ENCODE measurements at regions of chr15 and their contacts with region 1.

Region 1: GRCh38 chr15:25501828-25502446 is 63.1 kb upstream of the UBE3A start:
- DNase-seq: peak; percentile 32
- H3K4me3 ChIP-seq: no peak overlapping the region
- H3K27ac ChIP-seq: no peak overlapping the region
- H3K4me1 ChIP-seq: no peaks in the 10 kb centered on the region
- H3K27me3 ChIP-seq: no peaks in the 10 kb centered on the region
- CTCF ChIP-seq: peak; percentile 6 to 19
- POLR2A ChIP-seq: no peak

Region 2: GRCh38 chr15:25136119-25136518 is 365.8 kb before region 1 on chr15:
- CTCF ChIA-PET with region 1: no interaction called
- POLR2A ChIA-PET with region 1: no interaction called
- dilution Hi-C with region 1: no loop called
- intact Hi-C with region 1: loop called (anchors 5 kb)
- DNase-seq: peak; percentile 8
- H3K4me3 ChIP-seq: no peak overlapping the region
- H3K27ac ChIP-seq: no peak overlapping the region
- H3K4me1 ChIP-seq: no peaks in the 10 kb centered on the region
- H3K27me3 ChIP-seq: no peaks in the 10 kb centered on the region
- CTCF ChIP-seq: peak; percentile 10 to 33
- POLR2A ChIP-seq: no peak

Region 3: GRCh38 chr15:25572191-25572590 is 70.3 kb after region 1 on chr15:
- CTCF ChIA-PET with region 1: no interaction called
- POLR2A ChIA-PET with region 1: no interaction called
- dilution Hi-C with region 1: no loop called
- intact Hi-C with region 1: no loop called
- DNase-seq: no peak
- H3K4me3 ChIP-seq: no peak overlapping the region
- H3K27ac ChIP-seq: no peak overlapping the region
- H3K4me1 ChIP-seq: no peaks in the 10 kb centered on the region
- H3K27me3 ChIP-seq: no peaks in the 10 kb centered on the region
- CTCF ChIP-seq: no peak
- POLR2A ChIP-seq: no peak

Measured in endothelial cell of umbilical vein (primary cell).